ENCODE measurements at regions of chr1 and their contacts with region 1.

Region 1: DNA sequence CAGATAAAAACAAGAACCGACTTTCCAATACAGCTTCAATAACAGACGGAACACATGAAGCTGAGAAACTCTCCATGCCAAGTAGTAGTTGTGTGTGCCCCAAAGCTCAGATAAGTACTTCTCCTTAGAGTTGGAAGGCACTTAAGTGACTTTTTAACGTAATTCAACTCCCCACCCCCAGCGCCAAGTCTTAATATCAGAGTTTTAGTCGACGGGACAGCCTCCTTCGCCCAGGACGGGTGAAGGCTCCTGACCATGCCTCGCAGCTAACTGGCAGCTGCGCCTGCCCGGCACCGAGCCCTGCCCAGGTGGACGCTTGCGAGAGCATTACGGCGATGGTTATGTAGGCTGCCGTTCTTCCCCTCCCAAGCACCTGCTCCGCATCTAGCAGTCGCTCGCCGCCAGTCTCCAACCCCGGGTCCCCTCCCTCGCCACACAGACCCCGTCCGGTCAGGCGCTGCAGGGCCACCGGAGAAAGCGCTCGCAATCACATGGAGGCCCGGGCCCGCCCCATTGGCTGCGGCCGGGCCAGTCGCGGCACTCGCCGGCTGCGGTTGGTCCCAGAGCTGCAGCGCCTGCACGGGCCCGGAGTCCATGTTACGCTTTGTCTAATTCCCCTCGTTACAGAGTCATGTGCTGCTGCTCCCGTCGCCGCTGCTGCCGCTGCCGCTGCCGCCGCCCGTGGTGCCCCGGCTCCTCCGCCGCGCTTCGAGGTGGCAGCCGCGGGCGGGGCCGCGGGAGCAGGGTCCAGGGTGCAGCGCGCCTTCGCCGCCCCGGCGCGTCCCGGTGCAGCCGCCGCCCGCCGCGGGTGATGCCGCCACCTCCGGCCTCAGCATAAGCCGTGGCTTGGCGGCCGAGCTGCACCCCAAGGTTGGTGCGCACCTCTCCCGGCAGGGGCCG is at the start of gene LRRC8D:
- DNase-seq: peak; percentile 35 to 87 (median 51)
- ATAC-seq: peak; percentile 58
- H3K4me3 ChIP-seq: peak within 1 kb of the TSS; percentile 74
- H3K4me3 Mint-ChIP-seq: peak within 1 kb of the TSS; percentile 92
- H3K27ac ChIP-seq: peak within 1 kb of the TSS in 1 of 2 donors; percentile 59
- H3K27ac Mint-ChIP-seq: peak within 1 kb of the TSS; percentile 82
- H3K4me1 ChIP-seq: peaks cover 19% of the 10 kb centered on the region
- H3K4me1 Mint-ChIP-seq: peaks cover 44% of the 10 kb centered on the region
- H3K27me3 ChIP-seq: peaks cover 0 to 3% of the 10 kb centered on the region in 2 experiments
- H3K27me3 Mint-ChIP-seq: no peaks in the 10 kb centered on the region
- CTCF ChIP-seq: no peak
- total RNA-seq, gene LRRC8D: 15.5 to 18.2 TPM

Region 2: GRCh38 chr1:89605692-89606091 is 215.0 kb before region 1 on chr1:
- CTCF ChIA-PET with region 1: no interaction called
- POLR2A ChIA-PET with region 1: interaction called, 17 read pairs
- intact Hi-C with region 1: no loop called
- DNase-seq: no peak
- ATAC-seq: no peak
- H3K4me3 ChIP-seq: no peak overlapping the region
- H3K4me3 Mint-ChIP-seq: peak overlapping the region; percentile 56
- H3K27ac ChIP-seq: peak overlapping the region; percentile 80 to 91
- H3K27ac Mint-ChIP-seq: peak overlapping the region; percentile 99
- H3K4me1 ChIP-seq: peaks cover 81% of the 10 kb centered on the region
- H3K4me1 Mint-ChIP-seq: peaks cover 94% of the 10 kb centered on the region
- H3K27me3 ChIP-seq: no peaks in the 10 kb centered on the region
- H3K27me3 Mint-ChIP-seq: no peaks in the 10 kb centered on the region
- CTCF ChIP-seq: no peak

Region 3: GRCh38 chr1:89804642-89805237 is 15.9 kb before region 1 on chr1:
- CTCF ChIA-PET with region 1: interaction called, 18 read pairs
- POLR2A ChIA-PET with region 1: interaction called, 4 read pairs
- intact Hi-C with region 1: no loop called
- DNase-seq: peak; percentile 71 to 94 (median 84)
- ATAC-seq: peak; percentile 100
- H3K4me3 ChIP-seq: no peak overlapping the region
- H3K4me3 Mint-ChIP-seq: no peak overlapping the region
- H3K27ac ChIP-seq: no peak overlapping the region
- H3K27ac Mint-ChIP-seq: no peak overlapping the region
- H3K4me1 ChIP-seq: peaks cover 3% of the 10 kb centered on the region
- H3K4me1 Mint-ChIP-seq: no peaks in the 10 kb centered on the region
- H3K27me3 ChIP-seq: no peaks in the 10 kb centered on the region
- H3K27me3 Mint-ChIP-seq: no peaks in the 10 kb centered on the region
- CTCF ChIP-seq: peak; percentile 98

Region 4: GRCh38 chr1:89833183-89834082 is 12.8 kb after region 1 on chr1:
- CTCF ChIA-PET with region 1: interaction called, 3 read pairs
- POLR2A ChIA-PET with region 1: interaction called, 15 read pairs
- intact Hi-C with region 1: loop called in 1 of 2 experiments (anchors 2 kb)
- DNase-seq: no peak
- ATAC-seq: no peak
- H3K4me3 ChIP-seq: no peak overlapping the region
- H3K4me3 Mint-ChIP-seq: no peak overlapping the region
- H3K27ac ChIP-seq: no peak overlapping the region
- H3K27ac Mint-ChIP-seq: no peak overlapping the region
- H3K4me1 ChIP-seq: peaks cover 6% of the 10 kb centered on the region
- H3K4me1 Mint-ChIP-seq: peaks cover 4% of the 10 kb centered on the region
- H3K27me3 ChIP-seq: no peaks in the 10 kb centered on the region
- H3K27me3 Mint-ChIP-seq: no peaks in the 10 kb centered on the region
- CTCF ChIP-seq: no peak

Region 5: DNA sequence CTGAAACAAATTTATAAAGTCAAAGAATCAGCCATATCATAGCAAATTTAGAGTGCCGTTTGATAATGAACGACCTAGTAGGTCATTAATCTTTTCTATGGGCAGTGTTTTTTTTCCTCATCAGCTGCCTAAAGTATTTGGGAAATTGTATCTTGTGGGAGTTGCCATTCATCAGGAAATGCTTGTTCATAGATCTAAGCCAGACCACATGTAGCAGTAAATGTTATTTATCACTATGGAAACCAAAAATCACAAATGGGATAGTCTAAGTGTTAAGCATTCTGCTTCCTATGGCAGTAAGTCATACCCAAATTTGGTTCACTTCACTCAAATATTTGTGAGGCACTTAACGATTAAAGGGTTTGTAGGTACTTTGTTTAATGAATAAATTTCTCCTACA is 53.1 kb after region 1 on chr1:
- CTCF ChIA-PET with region 1: no interaction called
- POLR2A ChIA-PET with region 1: interaction called, 11 read pairs
- intact Hi-C with region 1: loop called in 1 of 2 experiments (anchors 10 kb)
- DNase-seq: peak in 3 of 14 experiments; percentile 47 to 55 (median 52)
- ATAC-seq: peak; percentile 35
- H3K4me3 ChIP-seq: no peak overlapping the region
- H3K4me3 Mint-ChIP-seq: peak overlapping the region; percentile 14
- H3K27ac ChIP-seq: no peak overlapping the region
- H3K27ac Mint-ChIP-seq: peak overlapping the region; percentile 80
- H3K4me1 ChIP-seq: peaks cover 13% of the 10 kb centered on the region
- H3K4me1 Mint-ChIP-seq: peaks cover 79% of the 10 kb centered on the region
- H3K27me3 ChIP-seq: no peaks in the 10 kb centered on the region
- H3K27me3 Mint-ChIP-seq: no peaks in the 10 kb centered on the region
- CTCF ChIP-seq: no peak

Region 6: DNA sequence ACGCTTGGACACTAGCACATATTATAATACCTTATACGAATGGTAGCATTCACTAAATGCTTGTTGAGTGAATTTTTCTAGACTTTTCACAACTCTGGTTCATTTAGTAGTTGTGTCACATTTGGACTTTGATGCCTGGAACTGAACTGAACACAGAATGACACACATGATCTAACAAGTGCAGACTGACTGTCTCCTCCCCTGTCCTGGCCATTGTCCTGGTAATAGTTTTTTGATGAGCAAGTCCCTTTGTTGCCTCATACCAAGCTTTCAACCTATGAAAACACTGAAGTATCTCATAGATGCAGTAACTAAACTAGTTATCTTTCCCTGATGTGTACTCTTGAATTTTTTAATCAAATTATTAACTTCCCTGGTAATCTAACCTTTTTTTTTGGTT is 66.6 kb after region 1 on chr1:
- CTCF ChIA-PET with region 1: no interaction called
- POLR2A ChIA-PET with region 1: no interaction called
- intact Hi-C with region 1: no loop called
- DNase-seq: no peak
- ATAC-seq: no peak
- H3K4me3 ChIP-seq: no peak overlapping the region
- H3K4me3 Mint-ChIP-seq: no peak overlapping the region
- H3K27ac ChIP-seq: no peak overlapping the region
- H3K27ac Mint-ChIP-seq: no peak overlapping the region
- H3K4me1 ChIP-seq: no peaks in the 10 kb centered on the region
- H3K4me1 Mint-ChIP-seq: peaks cover 51% of the 10 kb centered on the region
- H3K27me3 ChIP-seq: no peaks in the 10 kb centered on the region
- H3K27me3 Mint-ChIP-seq: no peaks in the 10 kb centered on the region
- CTCF ChIP-seq: no peak

Region 7: DNA sequence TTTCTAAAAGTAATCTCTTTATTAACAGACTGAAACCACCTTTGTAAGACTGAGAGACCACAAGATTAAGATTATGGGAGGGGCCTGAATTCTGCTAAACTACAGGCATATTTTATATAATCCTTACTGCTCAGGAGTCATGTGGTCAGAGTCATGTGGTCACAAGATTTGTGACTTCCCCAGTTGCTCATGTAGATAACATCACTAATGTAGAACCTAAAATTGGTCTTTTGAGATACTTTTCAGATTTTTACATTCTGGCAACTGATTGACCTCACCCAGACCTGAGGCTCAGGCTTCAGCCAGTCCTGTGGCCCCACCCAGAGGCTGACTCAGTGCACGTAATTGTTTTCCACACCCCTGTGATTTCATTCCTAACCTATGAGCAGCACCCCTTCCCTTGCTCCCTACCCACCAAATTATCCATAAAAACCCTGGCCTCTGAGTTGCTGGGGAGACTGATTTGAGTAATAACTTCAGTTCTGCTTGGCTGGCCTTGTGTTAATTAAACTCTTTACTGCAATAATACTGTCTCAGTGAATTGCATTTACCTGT is 132.5 kb after region 1 on chr1:
- CTCF ChIA-PET with region 1: no interaction called
- POLR2A ChIA-PET with region 1: interaction called, 6 read pairs
- intact Hi-C with region 1: loop called in 1 of 2 experiments (anchors 5 kb)
- DNase-seq: peak in 13 of 14 experiments; percentile 3 to 59 (median 20)
- ATAC-seq: peak; percentile 38
- H3K4me3 ChIP-seq: no peak overlapping the region
- H3K4me3 Mint-ChIP-seq: no peak overlapping the region
- H3K27ac ChIP-seq: no peak overlapping the region
- H3K27ac Mint-ChIP-seq: no peak overlapping the region
- H3K4me1 ChIP-seq: peaks cover 11% of the 10 kb centered on the region
- H3K4me1 Mint-ChIP-seq: peaks cover 23% of the 10 kb centered on the region
- H3K27me3 ChIP-seq: no peaks in the 10 kb centered on the region
- H3K27me3 Mint-ChIP-seq: no peaks in the 10 kb centered on the region
- CTCF ChIP-seq: peak; percentile 41

Region 8: GRCh38 chr1:89987170-89987819 is 166.6 kb after region 1 on chr1:
- CTCF ChIA-PET with region 1: no interaction called
- POLR2A ChIA-PET with region 1: interaction called, 3 read pairs
- intact Hi-C with region 1: loop called in 1 of 2 experiments (anchors 5 kb)
- DNase-seq: peak in 12 of 14 experiments; percentile 19 to 83 (median 45)
- ATAC-seq: peak; percentile 93
- H3K4me3 ChIP-seq: no peak overlapping the region
- H3K4me3 Mint-ChIP-seq: no peak overlapping the region
- H3K27ac ChIP-seq: no peak overlapping the region
- H3K27ac Mint-ChIP-seq: no peak overlapping the region
- H3K4me1 ChIP-seq: no peaks in the 10 kb centered on the region
- H3K4me1 Mint-ChIP-seq: no peaks in the 10 kb centered on the region
- H3K27me3 ChIP-seq: no peaks in the 10 kb centered on the region
- H3K27me3 Mint-ChIP-seq: no peaks in the 10 kb centered on the region
- CTCF ChIP-seq: peak; percentile 89

Region 9: GRCh38 chr1:90526954-90527353 is 706.3 kb after region 1 on chr1:
- CTCF ChIA-PET with region 1: no interaction called
- POLR2A ChIA-PET with region 1: no interaction called
- intact Hi-C with region 1: no loop called
- DNase-seq: no peak
- ATAC-seq: no peak
- H3K4me3 ChIP-seq: no peak overlapping the region
- H3K4me3 Mint-ChIP-seq: no peak overlapping the region
- H3K27ac ChIP-seq: no peak overlapping the region
- H3K27ac Mint-ChIP-seq: no peak overlapping the region
- H3K4me1 ChIP-seq: no peaks in the 10 kb centered on the region
- H3K4me1 Mint-ChIP-seq: no peaks in the 10 kb centered on the region
- H3K27me3 ChIP-seq: no peaks in the 10 kb centered on the region
- H3K27me3 Mint-ChIP-seq: peaks cover 5% of the 10 kb centered on the region
- CTCF ChIP-seq: no peak

Measured in CD4-positive, alpha-beta T cell (primary cell).